H1 (cell line): ENCODE measurements at regions of chr16 and their contacts with region 1.

Region 1: DNA sequence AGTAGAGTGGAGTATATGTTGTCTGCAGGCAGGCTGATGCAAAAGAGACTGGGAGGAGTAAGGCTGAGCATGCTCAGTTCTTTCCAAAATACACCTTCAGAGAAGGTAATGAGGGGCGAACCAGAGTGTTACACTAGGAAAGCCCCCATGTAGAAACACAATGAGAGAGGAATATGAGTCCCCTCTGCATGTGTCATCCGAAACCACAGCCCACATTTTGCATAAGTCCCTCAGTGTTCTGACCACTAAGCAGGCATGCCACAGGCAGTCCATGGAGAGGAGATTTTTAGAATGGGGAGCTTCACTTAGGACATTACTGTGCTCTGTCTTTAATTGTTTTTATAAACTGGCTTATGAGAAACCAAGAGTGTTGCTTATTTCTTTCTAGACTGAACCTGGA is 32.0 kb downstream of the SLC6A2 start:
- DNase-seq: no peak
- H3K4me3 ChIP-seq: no peak overlapping the region
- H3K27ac ChIP-seq: no peak overlapping the region
- H3K4me1 ChIP-seq: peaks cover 0 to 3% (median 0%) of the 10 kb centered on the region in 4 experiments; a peak in 2 of 7 replicates
- H3K27me3 ChIP-seq: no peaks in the 10 kb centered on the region; a peak in 1 of 7 replicates
- CTCF ChIP-seq: no peak
- EP300 ChIP-seq: no peak
- POLR2A ChIP-seq: no peak
- RAD21 ChIP-seq: no peak

Region 2: DNA sequence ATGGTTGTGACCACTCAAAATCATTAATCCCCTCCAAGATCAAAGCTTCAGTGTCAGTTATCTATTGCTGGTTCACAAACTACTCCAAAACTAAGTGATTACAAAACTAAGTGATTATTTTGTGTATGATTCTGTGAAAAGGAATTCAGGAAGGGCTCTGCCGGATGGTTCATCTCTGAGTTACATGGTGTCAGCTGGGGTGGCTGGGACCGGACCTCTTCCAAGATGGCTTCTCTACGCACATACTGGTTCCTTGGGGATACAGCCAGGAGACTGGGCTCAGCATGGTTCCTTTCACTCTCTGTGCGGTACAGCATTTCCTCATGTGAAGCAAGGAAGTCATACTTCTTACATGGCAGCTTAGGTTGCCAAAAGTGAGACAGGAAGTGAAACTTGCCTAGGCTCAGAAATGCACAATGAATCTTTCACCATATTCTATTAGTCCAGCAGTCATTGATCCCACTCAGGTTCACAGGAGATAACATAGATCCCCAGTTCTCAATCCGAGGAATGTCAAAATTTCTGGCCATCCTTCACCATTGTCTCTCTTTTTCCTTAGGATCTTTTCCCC is 461.7 kb before region 1 on chr16:
- CTCF ChIA-PET with region 1: no interaction called
- POLR2A ChIA-PET with region 1: no interaction called
- DNase-seq: no peak
- H3K4me3 ChIP-seq: no peak overlapping the region
- H3K27ac ChIP-seq: no peak overlapping the region
- H3K4me1 ChIP-seq: peaks cover 0 to 4% (median 0%) of the 10 kb centered on the region in 4 experiments; a peak in 1 of 7 replicates
- H3K27me3 ChIP-seq: no peaks in the 10 kb centered on the region
- CTCF ChIP-seq: no peak
- EP300 ChIP-seq: no peak
- POLR2A ChIP-seq: no peak
- RAD21 ChIP-seq: no peak

Region 3: GRCh38 chr16:55638256-55638655 is 49.5 kb before region 1 on chr16:
- CTCF ChIA-PET with region 1: no interaction called
- POLR2A ChIA-PET with region 1: no interaction called
- DNase-seq: no peak
- H3K4me3 ChIP-seq: no peak overlapping the region
- H3K27ac ChIP-seq: no peak overlapping the region
- H3K4me1 ChIP-seq: peaks cover 0 to 3% (median 0%) of the 10 kb centered on the region in 4 experiments; a peak in 1 of 7 replicates
- H3K27me3 ChIP-seq: no peaks in the 10 kb centered on the region
- CTCF ChIP-seq: no peak
- EP300 ChIP-seq: no peak
- POLR2A ChIP-seq: no peak
- RAD21 ChIP-seq: no peak

Region 4: DNA sequence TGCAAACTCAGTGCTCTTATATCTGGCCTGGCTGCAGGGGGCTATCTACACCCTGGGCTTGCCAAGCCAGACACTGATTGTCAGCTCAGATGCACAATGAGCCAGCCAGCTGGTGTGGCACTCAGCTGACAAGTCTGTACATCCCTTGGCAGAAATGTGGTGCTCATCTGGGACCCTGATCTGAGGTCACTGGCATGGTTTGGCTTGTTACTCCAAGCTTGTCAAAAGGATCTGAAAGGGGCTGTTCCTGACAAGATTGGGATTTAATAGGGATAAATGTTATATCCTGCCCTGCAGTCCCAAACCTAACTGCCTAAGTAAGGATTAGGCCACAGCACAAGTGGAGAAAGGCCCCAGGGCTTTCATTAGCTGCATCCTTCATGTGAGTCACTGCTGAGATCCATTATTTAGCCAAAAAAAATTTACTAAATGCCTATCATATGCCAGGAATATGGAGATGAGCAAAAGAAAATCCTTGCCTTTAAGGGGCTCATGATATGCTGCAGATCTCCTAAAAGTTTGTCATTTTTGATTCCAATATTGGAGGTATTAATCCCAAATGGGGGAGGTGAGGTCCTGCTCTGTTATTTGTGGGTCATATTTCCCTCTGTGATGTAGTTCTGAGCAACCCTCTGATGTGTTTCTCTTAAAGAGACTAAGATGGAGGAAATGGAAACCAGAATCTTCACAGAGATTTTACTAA is 25.7 kb before region 1 on chr16:
- CTCF ChIA-PET with region 1: interaction called, 10 read pairs
- POLR2A ChIA-PET with region 1: no interaction called
- DNase-seq: no peak
- H3K4me3 ChIP-seq: no peak overlapping the region
- H3K27ac ChIP-seq: no peak overlapping the region
- H3K4me1 ChIP-seq: no peaks in the 10 kb centered on the region
- H3K27me3 ChIP-seq: peaks cover 9 to 22% (median 14%) of the 10 kb centered on the region in 4 experiments
- CTCF ChIP-seq: no peak
- EP300 ChIP-seq: no peak
- POLR2A ChIP-seq: no peak
- RAD21 ChIP-seq: no peak

Region 5: GRCh38 chr16:55735120-55735781 is 47.4 kb after region 1 on chr16:
- CTCF ChIA-PET with region 1: no interaction called
- POLR2A ChIA-PET with region 1: no interaction called
- DNase-seq: no peak
- H3K4me3 ChIP-seq: no peak overlapping the region
- H3K27ac ChIP-seq: no peak overlapping the region
- H3K4me1 ChIP-seq: no peaks in the 10 kb centered on the region
- H3K27me3 ChIP-seq: no peaks in the 10 kb centered on the region
- CTCF ChIP-seq: no peak
- EP300 ChIP-seq: no peak
- POLR2A ChIP-seq: no peak
- RAD21 ChIP-seq: no peak

Region 6: DNA sequence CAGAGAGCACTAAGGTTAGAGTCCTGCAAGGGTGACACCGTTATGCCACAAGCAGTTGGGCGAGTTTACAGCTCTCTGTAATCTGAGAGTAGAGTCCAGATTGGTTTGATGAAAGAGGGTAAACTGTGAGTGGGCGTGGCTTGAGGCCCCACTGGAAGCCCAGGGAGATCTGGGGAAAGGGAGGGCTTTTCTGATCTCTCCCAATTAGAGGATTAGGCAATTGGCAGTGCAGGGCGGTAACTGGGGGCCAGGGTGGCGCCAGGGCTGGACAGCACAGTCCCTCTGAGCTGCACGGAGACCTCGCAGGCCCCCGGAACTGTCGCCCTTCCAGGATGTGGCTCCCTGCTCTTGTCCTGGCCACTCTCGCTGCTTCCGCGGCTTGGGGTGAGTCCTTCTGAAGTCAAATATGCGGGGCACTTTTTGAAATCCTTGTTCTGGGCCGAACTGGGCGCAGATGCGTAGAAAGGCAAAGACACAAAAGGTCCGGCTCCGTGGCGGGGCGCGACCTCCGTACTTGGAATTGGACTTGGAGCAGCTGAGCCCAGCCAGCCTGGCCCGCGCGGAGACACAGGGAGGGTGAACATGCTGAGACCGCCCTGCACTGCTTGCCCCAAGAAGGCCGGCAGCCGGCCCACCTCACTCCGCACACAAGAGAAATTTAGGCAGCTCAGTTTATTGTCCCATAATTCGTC is 72.7 kb after region 1 on chr16:
- CTCF ChIA-PET with region 1: no interaction called
- POLR2A ChIA-PET with region 1: no interaction called
- DNase-seq: peak in 1 of 2 experiments; percentile 62
- H3K4me3 ChIP-seq: peak overlapping the region in 1 of 4 experiments; percentile 35; a peak in 2 of 8 replicates
- H3K27ac ChIP-seq: no peak overlapping the region
- H3K4me1 ChIP-seq: peaks cover 0 to 5% (median 0%) of the 10 kb centered on the region in 4 experiments; a peak in 3 of 7 replicates
- H3K27me3 ChIP-seq: peaks cover 0 to 18% (median 2%) of the 10 kb centered on the region in 4 experiments; a peak in 4 of 7 replicates
- CTCF ChIP-seq: no peak
- EP300 ChIP-seq: no peak
- POLR2A ChIP-seq: no peak
- RAD21 ChIP-seq: no peak